Mammary epithelial cell (primary cell): ENCODE measurements at regions of chr1 and their contacts with region 1.

Region 1: DNA sequence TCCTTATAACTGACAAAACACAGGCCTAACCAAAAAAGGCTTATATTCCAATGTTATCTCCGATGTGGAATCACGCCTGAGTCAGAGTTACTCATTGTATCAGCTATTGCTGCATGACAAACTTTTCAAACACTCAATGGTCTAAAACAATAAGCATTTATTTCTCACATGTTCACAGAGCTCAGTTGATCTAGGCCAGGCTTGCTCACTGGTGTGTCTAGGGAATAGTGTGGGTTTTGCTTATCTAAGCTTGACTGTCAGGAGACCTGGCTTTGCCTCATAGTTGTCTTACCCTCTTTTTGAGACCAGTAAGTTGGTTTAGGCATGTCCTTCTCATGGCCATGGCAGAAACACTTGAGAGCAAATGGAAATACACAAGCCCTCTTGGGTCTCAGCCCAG is 130.7 kb downstream of the HMCN1 start:
- DNase-seq: peak; percentile 96
- H3K4me3 ChIP-seq: no peak overlapping the region
- H3K27ac ChIP-seq: peak overlapping the region; percentile 60
- H3K4me1 ChIP-seq: peaks cover 16% of the 10 kb centered on the region
- H3K27me3 ChIP-seq: no peaks in the 10 kb centered on the region
- CTCF ChIP-seq: no peak

Region 2: GRCh38 chr1:185853739-185854138 is 11.2 kb before region 1 on chr1:
- CTCF ChIA-PET with region 1: no interaction called
- dilution Hi-C with region 1: no loop called
- in situ Hi-C with region 1: no loop called
- intact Hi-C with region 1: loop called (anchors 1 kb)
- DNase-seq: peak; percentile 67
- H3K4me3 ChIP-seq: no peak overlapping the region
- H3K27ac ChIP-seq: no peak overlapping the region
- H3K4me1 ChIP-seq: peaks cover 25% of the 10 kb centered on the region
- H3K27me3 ChIP-seq: no peaks in the 10 kb centered on the region
- CTCF ChIP-seq: no peak

Region 3: DNA sequence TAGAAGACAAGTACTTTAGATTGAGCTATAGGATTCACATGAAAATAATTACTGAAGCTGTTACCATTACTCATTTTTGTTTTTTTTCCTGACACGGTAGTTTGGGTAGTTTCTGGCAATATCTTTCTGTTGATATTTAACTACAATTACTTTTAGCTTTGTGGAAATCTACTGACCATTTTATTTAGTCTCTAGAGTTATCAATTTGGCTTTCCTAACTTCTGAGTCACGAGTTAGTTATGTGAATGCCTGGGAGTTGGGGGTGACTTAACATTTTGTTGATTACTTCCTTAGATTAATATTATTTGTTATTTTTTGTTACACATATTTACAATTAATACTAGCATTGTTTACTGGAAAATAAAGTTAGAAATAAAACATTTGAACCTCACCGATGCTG is 29.9 kb after region 1 on chr1:
- CTCF ChIA-PET with region 1: no interaction called
- dilution Hi-C with region 1: loop called (anchors 5 kb)
- in situ Hi-C with region 1: no loop called
- intact Hi-C with region 1: no loop called
- DNase-seq: no peak
- H3K4me3 ChIP-seq: no peak overlapping the region
- H3K27ac ChIP-seq: no peak overlapping the region
- H3K4me1 ChIP-seq: no peaks in the 10 kb centered on the region
- H3K27me3 ChIP-seq: no peaks in the 10 kb centered on the region
- CTCF ChIP-seq: no peak